Right ventricle myocardium inferior (tissue), 1 donor: ENCODE measurements at regions of chr10 and their contacts with region 1.

Region 1: DNA sequence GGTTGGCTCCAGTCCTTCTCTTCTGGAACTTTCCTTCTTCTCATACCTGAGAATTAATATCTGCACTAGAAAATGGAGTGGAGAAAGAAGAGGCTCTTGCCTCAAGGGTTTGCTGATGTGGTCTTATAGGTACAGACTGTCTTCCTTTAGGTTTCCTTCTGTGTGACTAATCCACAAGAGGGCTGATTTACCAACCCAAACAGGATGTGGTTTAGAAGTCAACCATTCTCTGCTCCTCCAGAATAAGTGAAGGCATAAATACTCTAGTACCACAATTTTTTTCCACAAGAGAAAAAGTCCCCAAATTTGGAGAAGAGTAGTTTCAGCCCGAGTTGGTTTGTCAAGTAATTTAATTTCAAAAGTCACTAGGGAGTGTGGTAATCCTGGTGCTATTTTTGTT is 85.8 kb downstream of the NRP1 start:
- DNase-seq: no peak
- ATAC-seq: peak; percentile 9

Region 2: DNA sequence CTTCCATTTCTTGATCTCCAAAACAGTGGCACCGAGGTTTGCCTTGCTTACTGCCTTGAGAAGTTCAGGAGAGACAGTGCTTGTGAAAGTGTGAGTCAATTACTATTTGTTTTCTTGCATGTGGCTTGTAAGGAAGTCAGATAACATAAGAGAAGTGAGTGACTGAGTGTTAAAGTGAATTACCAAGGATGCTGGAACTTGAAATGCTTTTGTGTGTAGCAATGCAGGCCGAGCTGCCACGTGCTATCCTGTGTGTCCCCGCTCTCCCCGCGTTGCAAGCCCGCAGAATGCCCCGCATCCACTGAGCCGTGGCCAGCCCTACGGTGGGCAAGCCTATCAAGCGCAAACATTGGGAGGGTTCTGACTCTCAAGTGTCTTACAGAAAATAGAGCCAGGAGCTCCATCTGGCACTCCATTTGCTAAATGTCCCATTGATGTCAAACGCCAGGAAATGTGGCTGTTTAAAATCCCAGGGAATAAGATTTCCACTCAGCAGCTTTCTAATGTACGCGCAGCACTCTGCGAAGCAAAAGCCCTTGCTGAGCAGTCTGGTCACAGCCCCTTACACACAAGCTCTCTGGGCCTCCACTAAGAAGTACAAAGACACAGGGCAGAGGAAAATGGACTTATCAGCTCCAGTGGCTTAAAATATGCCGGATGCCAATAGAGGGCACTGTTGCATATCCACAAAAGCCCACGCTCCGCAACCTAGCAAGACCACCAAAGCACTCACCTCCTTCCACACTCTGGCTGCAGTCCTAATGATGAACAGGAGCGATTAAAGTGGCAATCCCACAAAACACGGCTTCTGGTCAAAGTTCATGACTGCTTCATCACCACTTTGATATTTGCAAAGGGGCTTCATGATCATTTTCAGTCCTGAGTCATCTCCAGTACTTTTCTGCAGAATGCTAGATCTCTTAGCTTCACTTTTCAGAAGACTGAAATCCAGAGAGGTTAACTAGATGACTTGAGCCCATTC is 132.6 kb before region 1 on chr10:
- intact Hi-C with region 1: no loop called
- DNase-seq: no peak
- ATAC-seq: peak; percentile 40

Region 3: GRCh38 chr10:33234831-33235237 is 13.8 kb before region 1 on chr10:
- intact Hi-C with region 1: loop called (anchors 1 kb)
- DNase-seq: peak; percentile 68
- ATAC-seq: peak; percentile 62